Activated naive CD4-positive, alpha-beta T cell treated with anti-CD3 and anti-CD28 coated beads for 36 hours (primary cell): ENCODE measurements at regions of chr12 and their contacts with region 1.

Region 1: DNA sequence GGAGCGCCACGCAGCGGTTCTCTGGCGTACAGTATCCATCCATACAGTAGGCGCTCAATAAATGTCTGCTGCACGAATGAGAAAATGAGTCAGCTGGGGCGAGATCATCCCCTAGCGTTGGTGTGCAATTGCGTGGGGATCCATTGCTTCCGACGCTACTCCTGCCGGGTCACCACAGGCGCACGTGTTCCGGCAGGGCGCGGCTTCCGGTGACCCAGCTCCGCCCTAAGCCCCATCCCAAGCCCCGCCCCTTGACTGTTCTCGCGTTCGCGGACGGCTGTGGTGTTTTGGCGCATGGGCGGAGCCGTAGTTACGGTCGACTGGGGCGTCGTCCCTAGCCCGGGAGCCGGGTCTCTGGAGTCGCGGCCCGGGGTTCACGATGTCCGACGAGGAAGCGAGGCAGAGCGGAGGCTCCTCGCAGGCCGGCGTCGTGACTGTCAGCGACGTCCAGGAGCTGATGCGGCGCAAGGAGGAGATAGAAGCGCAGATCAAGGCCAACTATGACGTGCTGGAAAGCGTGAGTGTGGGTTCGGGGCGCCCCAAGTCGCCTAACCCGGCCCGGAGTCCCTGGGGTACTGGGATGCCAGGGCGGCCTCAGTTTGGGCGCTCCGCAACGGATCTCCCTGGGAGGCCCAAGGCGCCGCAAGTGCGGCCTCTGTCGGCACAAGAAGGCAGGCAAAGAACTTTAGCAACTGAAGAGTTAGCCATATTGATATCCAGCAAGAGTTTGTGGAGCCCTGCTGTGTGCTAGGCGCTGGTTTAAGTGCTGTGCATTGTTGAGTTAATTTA is at the start of gene PSMD9:
- DNase-seq: peak; percentile 99
- H3K4me3 Mint-ChIP-seq: peak within 1 kb of the TSS; percentile 98
- H3K27ac Mint-ChIP-seq: peak within 1 kb of the TSS; percentile 94
- H3K4me1 Mint-ChIP-seq: peaks cover 37% of the 10 kb centered on the region
- H3K27me3 Mint-ChIP-seq: no peaks in the 10 kb centered on the region
- total RNA-seq, gene PSMD9: 56.6 to 60.6 TPM

Region 2: GRCh38 chr12:121296618-121297434 is 591.8 kb before region 1 on chr12 and contains the start of gene CAMKK2:
- CTCF ChIA-PET with region 1: no interaction called
- intact Hi-C with region 1: loop called (anchors 1 kb)
- DNase-seq: peak; percentile 82
- H3K4me3 Mint-ChIP-seq: peak within 1 kb of the TSS; percentile 90
- H3K27ac Mint-ChIP-seq: peak within 1 kb of the TSS; percentile 65
- H3K4me1 Mint-ChIP-seq: peaks cover 24% of the 10 kb centered on the region
- H3K27me3 Mint-ChIP-seq: no peaks in the 10 kb centered on the region
- total RNA-seq, gene CAMKK2: 14.8 to 18.8 TPM

Region 3: GRCh38 chr12:121522971-121523370 is 365.7 kb before region 1 on chr12:
- CTCF ChIA-PET with region 1: no interaction called
- intact Hi-C with region 1: no loop called
- DNase-seq: no peak
- H3K4me3 Mint-ChIP-seq: no peak overlapping the region
- H3K27ac Mint-ChIP-seq: no peak overlapping the region
- H3K4me1 Mint-ChIP-seq: no peaks in the 10 kb centered on the region
- H3K27me3 Mint-ChIP-seq: no peaks in the 10 kb centered on the region

Region 4: DNA sequence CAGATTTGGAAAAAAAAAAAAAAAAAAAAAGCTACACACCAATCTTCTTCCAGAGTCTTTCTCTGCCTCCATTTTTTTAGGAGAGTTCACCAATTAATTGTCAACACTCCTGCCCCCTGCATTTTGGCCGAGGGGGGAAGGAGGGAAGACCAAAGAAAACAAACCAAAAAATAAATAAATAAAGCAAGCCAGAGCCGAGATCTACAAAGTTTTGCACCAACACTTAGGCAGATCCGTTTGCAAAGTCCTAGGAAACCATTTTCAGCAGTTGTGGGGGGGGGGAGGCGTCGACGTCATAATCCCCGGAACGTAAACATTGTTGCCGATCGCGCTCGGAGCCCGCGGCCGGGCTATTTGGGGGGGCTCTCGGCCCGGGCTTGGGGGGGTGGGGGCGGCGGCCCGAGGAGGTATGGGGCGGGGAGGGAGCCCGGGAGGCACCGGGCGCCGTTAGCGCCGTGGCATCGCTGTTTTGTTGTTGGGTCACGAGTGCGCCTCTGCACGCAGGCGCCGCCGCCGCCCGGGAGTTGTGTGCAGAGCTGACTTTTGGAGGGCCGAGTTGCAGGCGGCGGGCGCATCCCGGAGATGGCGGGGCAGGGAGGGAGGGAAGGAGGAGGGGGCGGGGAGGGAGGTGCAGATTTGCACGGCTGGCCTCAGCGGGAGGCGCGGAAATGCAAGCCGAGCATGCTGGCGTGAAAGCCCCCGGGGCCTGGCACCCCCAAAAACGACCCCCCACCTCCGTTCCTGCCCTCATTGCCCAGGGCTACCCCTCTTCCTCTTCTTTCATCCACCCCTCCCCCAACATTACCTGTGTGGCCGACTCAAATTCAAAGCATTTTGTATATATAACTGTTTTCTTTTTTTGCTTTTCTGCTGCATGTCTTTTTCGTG is 308.4 kb before region 1 on chr12:
- CTCF ChIA-PET with region 1: no interaction called
- intact Hi-C with region 1: no loop called
- DNase-seq: peak; percentile 85
- H3K4me3 Mint-ChIP-seq: peak overlapping the region; percentile 90
- H3K27ac Mint-ChIP-seq: peak overlapping the region; percentile 92
- H3K4me1 Mint-ChIP-seq: peaks cover 16% of the 10 kb centered on the region
- H3K27me3 Mint-ChIP-seq: no peaks in the 10 kb centered on the region

Region 5: GRCh38 chr12:121626087-121626852 is 262.4 kb before region 1 on chr12 and contains the start of gene ORAI1:
- CTCF ChIA-PET with region 1: no interaction called
- intact Hi-C with region 1: loop called (anchors 2 kb)
- DNase-seq: peak; percentile 97
- H3K4me3 Mint-ChIP-seq: peak within 1 kb of the TSS; percentile 83
- H3K27ac Mint-ChIP-seq: peak within 1 kb of the TSS; percentile 98
- H3K4me1 Mint-ChIP-seq: peaks cover 37% of the 10 kb centered on the region
- H3K27me3 Mint-ChIP-seq: no peaks in the 10 kb centered on the region
- total RNA-seq, gene ORAI1: 21.1 to 21.8 TPM

Region 6: DNA sequence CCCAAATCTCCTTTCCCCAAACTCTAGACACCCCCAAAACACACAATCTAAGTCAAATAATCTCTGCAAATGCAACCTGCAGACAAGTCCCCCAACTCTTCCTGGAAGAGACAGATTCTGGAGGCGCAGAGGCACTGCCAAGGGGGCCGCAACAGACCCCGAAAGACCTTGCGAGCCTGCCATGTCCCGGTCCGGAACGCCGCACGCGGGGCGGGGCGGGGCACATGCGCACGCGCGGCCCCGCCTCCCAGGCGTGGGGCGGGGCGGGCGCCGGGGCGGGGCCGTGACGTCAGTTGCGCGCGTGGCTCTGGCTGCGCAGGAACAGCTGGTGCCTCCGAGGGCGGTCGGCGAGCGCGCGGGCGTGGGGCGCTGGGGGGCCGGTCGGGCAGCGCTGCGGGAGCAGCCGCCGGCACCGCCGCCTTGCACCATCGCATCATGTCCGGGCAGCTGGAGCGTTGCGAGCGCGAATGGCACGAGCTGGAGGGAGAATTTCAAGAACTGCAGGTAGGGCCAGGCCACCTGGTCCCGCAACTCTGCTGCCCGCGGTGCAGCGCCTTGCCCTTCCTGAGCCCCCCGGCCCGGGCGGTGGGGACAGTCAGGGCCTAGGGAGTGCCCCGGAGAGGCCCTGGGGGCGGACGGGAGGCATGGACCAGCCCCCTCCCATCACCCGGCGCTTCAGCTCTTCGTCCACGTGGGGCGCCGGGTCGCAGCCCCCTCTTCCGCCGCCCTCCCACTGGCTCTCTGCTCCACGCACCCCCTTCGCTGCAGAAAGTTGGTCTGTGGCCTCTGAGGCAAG is 176.0 kb before region 1 on chr12 and contains the start of gene TMEM120B:
- CTCF ChIA-PET with region 1: interaction called, 3 read pairs
- intact Hi-C with region 1: loop called (anchors 2 kb)
- DNase-seq: peak; percentile 77
- H3K4me3 Mint-ChIP-seq: peak within 1 kb of the TSS; percentile 87
- H3K27ac Mint-ChIP-seq: peak within 1 kb of the TSS; percentile 77
- H3K4me1 Mint-ChIP-seq: peaks cover 19% of the 10 kb centered on the region
- H3K27me3 Mint-ChIP-seq: no peaks in the 10 kb centered on the region
- total RNA-seq, gene TMEM120B: 5.5 to 6.3 TPM

Region 7: DNA sequence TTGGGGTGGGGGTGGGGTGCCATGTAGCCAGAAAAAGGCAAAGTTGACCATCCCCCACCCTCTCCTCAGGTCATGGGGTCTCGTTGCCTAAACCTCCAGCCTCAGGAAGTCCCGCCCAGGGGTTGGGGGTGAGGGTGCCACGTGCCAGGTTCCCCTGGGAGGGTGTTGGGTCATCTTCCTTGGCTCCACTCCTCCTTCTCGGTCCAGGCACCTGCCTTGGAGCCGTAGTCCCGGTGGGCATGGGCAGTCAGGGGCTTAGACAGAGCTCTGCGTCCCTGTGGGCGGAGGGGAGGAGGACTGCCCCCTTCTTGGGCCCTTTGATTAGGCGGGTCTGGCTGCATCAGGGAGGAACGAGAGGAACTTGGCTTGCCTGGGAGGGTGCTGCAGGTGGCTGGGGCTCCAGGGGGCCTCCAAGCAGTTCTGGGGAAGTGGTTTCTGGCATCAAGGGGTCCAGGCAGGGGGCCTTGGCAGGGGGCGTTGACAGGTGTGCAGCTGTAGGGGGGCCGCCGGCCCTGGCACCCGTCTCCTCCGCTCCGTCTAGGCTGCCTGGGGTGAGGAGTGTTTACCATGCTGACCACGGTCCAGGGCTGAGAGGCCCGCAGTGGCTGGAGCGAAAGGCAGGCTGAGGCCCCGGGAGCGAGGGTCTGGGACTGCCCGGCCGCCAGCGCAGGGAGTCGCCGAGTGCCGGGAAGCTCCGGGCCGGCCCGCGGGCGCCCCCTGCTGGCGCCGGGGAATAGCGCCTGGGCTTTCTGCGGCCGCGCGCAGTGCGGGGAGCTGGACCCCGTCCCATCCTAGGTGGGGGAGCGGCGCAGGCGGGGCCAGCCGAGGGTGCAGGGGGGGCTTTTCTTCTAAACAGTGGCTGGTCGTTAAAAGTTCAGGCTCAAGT is 77.0 kb before region 1 on chr12:
- CTCF ChIA-PET with region 1: interaction called, 6 read pairs
- intact Hi-C with region 1: loop called (anchors 1 kb)
- DNase-seq: peak; percentile 67
- H3K4me3 Mint-ChIP-seq: peak overlapping the region; percentile 78
- H3K27ac Mint-ChIP-seq: peak overlapping the region; percentile 86
- H3K4me1 Mint-ChIP-seq: peaks cover 52% of the 10 kb centered on the region
- H3K27me3 Mint-ChIP-seq: no peaks in the 10 kb centered on the region

Region 8: GRCh38 chr12:121917979-121918678 is 29.5 kb after region 1 on chr12 and contains the start of gene CFAP251:
- CTCF ChIA-PET with region 1: interaction called, 5 read pairs
- intact Hi-C with region 1: loop called (anchors 1 kb)
- DNase-seq: peak; percentile 98
- H3K4me3 Mint-ChIP-seq: peak within 1 kb of the TSS; percentile 69
- H3K27ac Mint-ChIP-seq: peak within 1 kb of the TSS; percentile 78
- H3K4me1 Mint-ChIP-seq: peaks cover 16% of the 10 kb centered on the region
- H3K27me3 Mint-ChIP-seq: no peaks in the 10 kb centered on the region
- total RNA-seq, gene CFAP251: 0.20 to 0.62 TPM

Region 9: GRCh38 chr12:122225683-122226407 is 337.2 kb after region 1 on chr12 and contains the start of gene DIABLO:
- CTCF ChIA-PET with region 1: no interaction called
- intact Hi-C with region 1: loop called (anchors 1 kb)
- DNase-seq: peak; percentile 100
- H3K4me3 Mint-ChIP-seq: peak within 1 kb of the TSS; percentile 84
- H3K27ac Mint-ChIP-seq: peak within 1 kb of the TSS; percentile 79
- H3K4me1 Mint-ChIP-seq: peaks cover 39% of the 10 kb centered on the region
- H3K27me3 Mint-ChIP-seq: no peaks in the 10 kb centered on the region
- total RNA-seq, gene DIABLO: 46.1 to 48.1 TPM